H1 (cell line): ENCODE measurements at regions of chr16 and their contacts with region 1.

Region 1: DNA sequence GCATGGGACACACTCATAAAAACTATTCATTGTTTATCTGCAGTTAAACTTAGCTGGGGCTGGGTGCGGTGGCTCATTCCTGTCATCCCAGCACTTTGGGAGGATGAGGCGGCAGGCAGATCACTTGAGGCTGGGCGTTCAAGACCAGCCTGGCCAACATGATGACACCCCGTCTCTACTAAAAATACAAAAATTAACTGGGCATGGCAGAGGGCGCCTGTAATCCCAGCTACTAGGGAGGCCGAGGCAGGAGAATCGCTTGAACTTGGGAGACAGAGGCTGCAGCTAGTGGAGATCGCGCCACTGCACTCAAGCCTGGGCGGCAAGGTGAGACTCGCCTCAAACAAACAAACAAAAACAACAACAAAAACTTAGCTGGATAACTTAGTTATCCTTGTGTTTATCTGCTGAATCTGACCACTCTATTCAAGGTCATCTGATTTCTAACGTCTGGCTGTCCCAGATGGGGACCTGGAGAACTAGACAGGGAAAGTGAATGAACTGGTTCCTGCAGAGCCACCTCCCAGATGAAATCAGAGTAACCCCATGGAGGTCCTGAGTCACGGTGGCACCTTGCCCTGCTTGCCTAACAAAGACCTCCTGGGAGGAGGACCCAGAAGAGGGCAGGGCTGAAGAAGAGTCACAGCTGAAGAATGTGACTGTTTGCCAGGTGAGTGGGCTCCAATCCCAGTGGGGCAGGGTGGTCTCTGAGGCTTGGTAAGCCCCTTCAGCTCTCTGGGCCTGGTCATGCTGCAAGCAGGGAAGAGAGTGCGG is 4.7 kb downstream of the C16orf74 start:
- DNase-seq: peak in 1 of 2 experiments; percentile 56
- H3K4me3 ChIP-seq: no peak overlapping the region
- H3K27ac ChIP-seq: 0 out of 2 replicates have a peak overlapping the region, but pooled peaks have one; percentile 2
- H3K4me1 ChIP-seq: peaks cover 0 to 22% (median 14%) of the 10 kb centered on the region in 4 experiments; a peak in 6 of 7 replicates
- H3K27me3 ChIP-seq: peaks cover 1 to 16% (median 10%) of the 10 kb centered on the region in 4 experiments; a peak in 6 of 7 replicates
- CTCF ChIP-seq: no peak
- EP300 ChIP-seq: no peak
- POLR2A ChIP-seq: no peak
- RAD21 ChIP-seq: no peak

Region 2: DNA sequence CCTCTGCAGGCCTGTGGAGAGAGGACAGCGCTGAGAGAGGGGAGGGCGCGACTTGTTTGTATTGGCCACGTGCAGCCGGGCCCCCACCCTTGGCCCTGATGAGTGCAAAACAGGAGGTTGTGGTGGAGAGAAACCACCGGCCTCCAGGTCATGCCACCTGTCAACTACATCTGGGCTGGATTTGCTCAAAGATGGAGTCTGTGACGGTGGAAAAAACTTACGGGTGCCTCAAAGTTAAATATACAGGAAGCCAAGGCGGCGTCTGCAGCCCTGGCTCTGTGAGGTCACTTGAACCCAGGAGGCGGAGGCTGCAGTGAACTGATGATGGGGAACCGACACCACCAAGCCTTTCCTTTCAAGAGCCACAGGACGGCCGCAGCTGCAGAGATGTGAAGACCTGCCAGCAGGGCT is 11.0 kb before region 1 on chr16:
- CTCF ChIA-PET with region 1: interaction called, 11 read pairs
- POLR2A ChIA-PET with region 1: interaction called, 5 read pairs
- DNase-seq: no peak
- H3K4me3 ChIP-seq: no peak overlapping the region
- H3K27ac ChIP-seq: no peak overlapping the region
- H3K4me1 ChIP-seq: peaks cover 3 to 10% (median 9%) of the 10 kb centered on the region in 4 experiments
- H3K27me3 ChIP-seq: no peaks in the 10 kb centered on the region; a peak in 1 of 7 replicates
- CTCF ChIP-seq: no peak
- EP300 ChIP-seq: no peak
- POLR2A ChIP-seq: no peak
- RAD21 ChIP-seq: no peak

Region 3: GRCh38 chr16:85759631-85760419 is 13.6 kb after region 1 on chr16:
- CTCF ChIA-PET with region 1: interaction called, 17 read pairs
- POLR2A ChIA-PET with region 1: no interaction called
- DNase-seq: peak in 1 of 2 experiments; percentile 75
- H3K4me3 ChIP-seq: no peak overlapping the region
- H3K27ac ChIP-seq: no peak overlapping the region
- H3K4me1 ChIP-seq: no peaks in the 10 kb centered on the region; a peak in 1 of 7 replicates
- H3K27me3 ChIP-seq: 0 out of 7 replicates have a peak, but pooled peaks cover 0 to 2% (median 0%) of the 10 kb centered on the region in 4 experiments
- CTCF ChIP-seq: peak; percentile 77 to 88 (median 83)
- EP300 ChIP-seq: no peak
- POLR2A ChIP-seq: no peak
- RAD21 ChIP-seq: peak; percentile 71 to 79